Left cardiac atrium (tissue), 4 donors: ENCODE measurements at regions of chr19 and their contacts with region 1.

Region 1: GRCh38 chr19:53504885-53505284 is 33.1 kb upstream of the ZNF331 start:
- DNase-seq: no peak
- ATAC-seq: no peak

Region 2: GRCh38 chr19:53424968-53425597 is 79.8 kb before region 1 on chr19:
- intact Hi-C with region 1: loop called in 1 of 2 experiments (anchors 5 kb)
- DNase-seq: peak; percentile 83
- ATAC-seq: peak; percentile 94 to 96